ENCODE measurements at regions of chr1 and their contacts with region 1.

Region 1: GRCh38 chr1:226736908-226737818 is 1.9 kb downstream of the ITPKB start:
- DNase-seq: peak in 7 of 9 donors; percentile 45 to 66 (median 59)
- ATAC-seq: peak; percentile 51
- H3K4me3 ChIP-seq: peak overlapping the region; percentile 99
- H3K4me3 Mint-ChIP-seq: peak overlapping the region; percentile 89 to 99 (median 93)
- H3K27ac ChIP-seq: peak overlapping the region; percentile 92
- H3K27ac Mint-ChIP-seq: peak overlapping the region; percentile 81 to 99 (median 97)
- H3K4me1 ChIP-seq: peaks cover 22 to 38% of the 10 kb centered on the region in 2 donors
- H3K4me1 Mint-ChIP-seq: peaks cover 14 to 54% (median 35%) of the 10 kb centered on the region in 7 donors
- H3K27me3 ChIP-seq: no peaks in the 10 kb centered on the region
- H3K27me3 Mint-ChIP-seq: no peaks in the 10 kb centered on the region

Region 2: DNA sequence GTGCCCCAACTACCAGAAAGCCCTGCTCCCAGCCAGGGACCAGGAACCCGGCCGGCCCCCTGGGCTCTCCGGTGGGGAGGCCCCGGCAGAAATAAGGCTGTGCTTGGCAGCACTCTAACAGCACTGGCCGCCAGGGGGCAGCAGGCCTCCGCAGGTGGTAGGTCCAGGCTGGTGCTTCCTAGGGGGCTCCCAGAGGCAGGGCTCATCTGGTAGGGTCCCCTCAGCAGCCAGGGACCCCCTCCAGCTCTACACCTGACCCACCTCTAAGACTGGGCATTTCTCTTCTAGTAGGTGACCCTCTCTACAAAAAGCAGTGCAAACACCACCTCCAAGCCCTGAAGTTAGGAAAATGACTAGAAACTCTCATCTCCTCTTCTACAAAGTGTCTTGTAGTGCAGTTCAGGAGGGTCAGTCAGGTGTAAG is 103.0 kb before region 1 on chr1:
- CTCF ChIA-PET with region 1: interaction called, 7 read pairs
- POLR2A ChIA-PET with region 1: interaction called, 18 read pairs
- intact Hi-C with region 1: loop called (anchors 1 kb)
- DNase-seq: peak; percentile 69 to 86 (median 79)
- ATAC-seq: peak; percentile 89
- H3K4me3 ChIP-seq: no peak overlapping the region
- H3K4me3 Mint-ChIP-seq: peak overlapping the region; percentile 10 to 90 (median 64)
- H3K27ac ChIP-seq: peak overlapping the region; percentile 54
- H3K27ac Mint-ChIP-seq: peak overlapping the region; percentile 76 to 98 (median 90)
- H3K4me1 ChIP-seq: peaks cover 26 to 48% of the 10 kb centered on the region in 2 donors
- H3K4me1 Mint-ChIP-seq: peaks cover 23 to 75% (median 61%) of the 10 kb centered on the region in 7 donors
- H3K27me3 ChIP-seq: no peaks in the 10 kb centered on the region
- H3K27me3 Mint-ChIP-seq: no peaks in the 10 kb centered on the region

Region 3: GRCh38 chr1:226679853-226680516 is 57.2 kb before region 1 on chr1:
- CTCF ChIA-PET with region 1: interaction called, 3 read pairs
- POLR2A ChIA-PET with region 1: interaction called, 13 read pairs
- intact Hi-C with region 1: loop called (anchors 1 kb)
- DNase-seq: peak; percentile 42 to 89 (median 75)
- ATAC-seq: peak; percentile 58
- H3K4me3 ChIP-seq: peak overlapping the region; percentile 40
- H3K4me3 Mint-ChIP-seq: peak overlapping the region; percentile 80 to 90 (median 82)
- H3K27ac ChIP-seq: peak overlapping the region; percentile 86
- H3K27ac Mint-ChIP-seq: peak overlapping the region; percentile 95 to 100 (median 99)
- H3K4me1 ChIP-seq: peaks cover 86 to 97% of the 10 kb centered on the region in 2 donors
- H3K4me1 Mint-ChIP-seq: peaks cover 83 to 100% (median 99%) of the 10 kb centered on the region in 7 donors
- H3K27me3 ChIP-seq: no peaks in the 10 kb centered on the region
- H3K27me3 Mint-ChIP-seq: peaks cover 0 to under 1% (median 0%) of the 10 kb centered on the region in 5 donors

Region 4: DNA sequence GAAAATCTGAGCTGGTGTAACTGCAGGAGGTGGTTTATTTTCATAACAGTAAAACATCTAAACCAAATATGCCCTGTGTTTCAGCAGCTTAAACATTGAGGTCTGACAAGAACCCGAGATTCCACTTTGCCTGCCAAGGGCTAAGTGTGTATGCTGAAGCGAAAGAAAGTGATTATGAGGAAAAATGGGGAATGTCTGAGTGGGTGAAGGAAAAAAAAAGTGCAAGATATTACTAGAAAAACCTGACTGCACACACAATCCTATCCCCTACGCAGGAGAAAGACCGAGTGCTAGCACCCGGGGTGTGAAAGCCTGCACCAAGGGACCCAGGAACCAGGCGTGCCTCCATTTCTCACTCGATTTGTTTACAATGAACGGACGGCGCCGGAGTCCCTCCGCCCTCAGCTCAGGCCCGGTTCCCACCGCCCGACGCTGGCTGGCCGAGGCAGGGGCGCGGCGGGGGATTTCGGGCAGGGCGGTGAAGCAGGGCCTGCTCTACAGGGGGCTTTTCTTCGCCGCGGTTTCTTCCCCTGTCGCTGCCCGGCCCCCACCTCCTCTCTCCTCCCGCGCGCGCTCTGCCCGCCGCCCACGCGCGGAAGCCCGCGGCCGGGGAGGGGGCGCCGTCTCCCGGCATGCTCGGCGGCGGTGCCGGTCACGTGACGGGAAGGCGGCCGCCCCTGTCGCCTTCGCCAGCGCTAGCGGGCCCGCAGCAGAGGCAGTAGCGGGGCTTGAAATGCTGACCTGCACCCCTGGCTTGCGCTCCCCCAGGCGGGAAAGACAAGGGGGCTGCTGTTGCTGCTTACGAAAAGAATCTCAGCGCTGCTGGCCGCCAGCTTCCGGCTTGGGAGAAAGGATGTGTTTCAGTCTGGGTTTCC is 34.0 kb before region 1 on chr1:
- CTCF ChIA-PET with region 1: interaction called, 3 read pairs
- POLR2A ChIA-PET with region 1: interaction called, 11 read pairs
- intact Hi-C with region 1: loop called (anchors 1 to 5 kb)
- DNase-seq: peak; percentile 79 to 93 (median 86)
- ATAC-seq: peak; percentile 92
- H3K4me3 ChIP-seq: peak overlapping the region; percentile 69
- H3K4me3 Mint-ChIP-seq: peak overlapping the region; percentile 81 to 92 (median 86)
- H3K27ac ChIP-seq: peak overlapping the region; percentile 93
- H3K27ac Mint-ChIP-seq: peak overlapping the region; percentile 89 to 99 (median 95)
- H3K4me1 ChIP-seq: peaks cover 42 to 85% of the 10 kb centered on the region in 2 donors
- H3K4me1 Mint-ChIP-seq: peaks cover 59 to 95% (median 81%) of the 10 kb centered on the region in 7 donors
- H3K27me3 ChIP-seq: no peaks in the 10 kb centered on the region
- H3K27me3 Mint-ChIP-seq: no peaks in the 10 kb centered on the region

Region 5: DNA sequence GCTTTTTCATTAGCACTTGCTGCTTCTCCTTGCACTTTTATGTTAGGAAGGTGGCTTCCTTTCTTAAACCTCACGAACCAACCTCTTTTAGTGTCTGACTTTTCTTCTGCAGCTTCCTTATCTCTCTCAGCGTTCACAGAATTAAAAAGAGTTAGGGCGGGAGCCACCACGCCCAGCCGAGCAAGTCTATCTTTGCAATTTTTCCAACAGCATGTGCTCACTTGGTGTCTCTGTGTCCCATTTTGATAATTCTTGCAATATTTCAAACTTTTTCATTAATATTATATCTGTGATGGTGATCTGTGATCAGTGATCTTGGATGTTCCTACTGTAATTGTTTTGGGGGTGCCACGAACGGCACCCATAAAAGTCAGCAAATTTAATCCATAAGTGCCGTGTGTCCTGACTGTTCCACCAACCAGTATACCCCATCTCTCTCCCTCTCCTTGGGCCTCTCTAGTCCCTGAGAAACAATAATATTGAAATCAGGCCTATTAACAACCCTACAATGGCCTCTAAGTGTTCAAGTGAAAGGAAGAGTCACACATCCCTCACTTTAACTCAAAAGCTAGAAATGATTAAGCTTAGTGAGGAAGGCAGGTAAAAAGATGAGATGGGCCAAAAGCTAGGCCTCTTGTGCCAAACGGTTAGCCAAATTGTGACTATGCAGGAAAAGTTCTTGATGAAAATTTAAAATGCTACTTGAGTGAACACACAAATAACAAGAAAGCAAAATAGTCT is 17.8 kb after region 1 on chr1:
- CTCF ChIA-PET with region 1: no interaction called
- POLR2A ChIA-PET with region 1: interaction called, 10 read pairs
- intact Hi-C with region 1: loop called in 1 of 2 experiments (anchors 1 kb)
- DNase-seq: peak in 1 of 9 donors; percentile 10
- ATAC-seq: no peak
- H3K4me3 ChIP-seq: no peak overlapping the region
- H3K4me3 Mint-ChIP-seq: peak overlapping the region in 8 of 10 donors; percentile 5 to 75 (median 40)
- H3K27ac ChIP-seq: no peak overlapping the region
- H3K27ac Mint-ChIP-seq: peak overlapping the region in 8 of 9 donors; percentile 6 to 89 (median 57)
- H3K4me1 ChIP-seq: peaks cover 0 to 30% of the 10 kb centered on the region in 2 donors
- H3K4me1 Mint-ChIP-seq: peaks cover 17 to 50% (median 40%) of the 10 kb centered on the region in 7 donors
- H3K27me3 ChIP-seq: no peaks in the 10 kb centered on the region
- H3K27me3 Mint-ChIP-seq: peaks cover 0 to 8% (median 0%) of the 10 kb centered on the region in 5 donors

Region 6: GRCh38 chr1:226882631-226883409 is 145.7 kb after region 1 on chr1:
- CTCF ChIA-PET with region 1: no interaction called
- POLR2A ChIA-PET with region 1: interaction called, 4 read pairs
- intact Hi-C with region 1: loop called (anchors 2 to 5 kb)
- DNase-seq: peak in 8 of 9 donors; percentile 31 to 65 (median 52)
- ATAC-seq: peak; percentile 79
- H3K4me3 ChIP-seq: peak overlapping the region; percentile 48
- H3K4me3 Mint-ChIP-seq: peak overlapping the region; percentile 65 to 88 (median 80)
- H3K27ac ChIP-seq: peak overlapping the region; percentile 73
- H3K27ac Mint-ChIP-seq: peak overlapping the region; percentile 85 to 98 (median 91)
- H3K4me1 ChIP-seq: peaks cover 4 to 34% of the 10 kb centered on the region in 2 donors
- H3K4me1 Mint-ChIP-seq: peaks cover 44 to 57% (median 51%) of the 10 kb centered on the region in 7 donors
- H3K27me3 ChIP-seq: no peaks in the 10 kb centered on the region
- H3K27me3 Mint-ChIP-seq: no peaks in the 10 kb centered on the region